ENCODE measurements at regions of chr2 and their contacts with region 1.

Region 1: DNA sequence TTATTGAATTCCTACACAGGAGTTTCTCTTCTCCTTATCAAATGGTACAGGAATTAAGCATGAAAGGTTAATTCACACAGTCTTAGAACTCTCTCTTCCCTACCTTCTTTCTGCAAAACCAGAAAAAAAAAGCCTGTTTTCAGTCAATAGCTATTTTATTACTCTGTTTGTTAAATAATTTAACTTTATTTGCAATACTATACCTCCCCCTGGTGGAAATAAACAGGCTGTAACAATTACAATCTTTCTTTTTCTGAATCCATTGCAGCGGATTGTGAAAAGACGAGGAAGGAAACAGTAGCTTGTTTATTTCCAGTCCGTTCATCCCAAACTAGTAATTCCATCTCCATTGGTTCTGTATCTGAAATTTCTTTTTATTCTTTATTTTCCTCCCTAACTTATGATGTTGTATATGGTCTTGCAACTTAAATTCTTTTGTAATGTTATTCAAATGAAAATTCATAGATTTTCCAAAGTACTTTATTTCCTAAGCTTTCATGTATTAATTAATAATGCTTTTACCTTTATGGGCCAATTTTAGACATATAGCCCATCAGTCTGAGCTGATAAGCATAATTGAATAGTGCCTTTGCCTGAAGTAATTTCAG is 165.2 kb downstream of the SH3BP4 start:
- DNase-seq: no peak
- H3K4me3 ChIP-seq: no peak overlapping the region
- CTCF ChIP-seq: peak; percentile 22

Region 2: GRCh38 chr2:234500394-234501006 is 616.5 kb before region 1 on chr2:
- CTCF ChIA-PET with region 1: interaction called, 25 read pairs
- POLR2A ChIA-PET with region 1: no interaction called
- DNase-seq: no peak
- H3K4me3 ChIP-seq: no peak overlapping the region
- CTCF ChIP-seq: peak; percentile 46

Region 3: DNA sequence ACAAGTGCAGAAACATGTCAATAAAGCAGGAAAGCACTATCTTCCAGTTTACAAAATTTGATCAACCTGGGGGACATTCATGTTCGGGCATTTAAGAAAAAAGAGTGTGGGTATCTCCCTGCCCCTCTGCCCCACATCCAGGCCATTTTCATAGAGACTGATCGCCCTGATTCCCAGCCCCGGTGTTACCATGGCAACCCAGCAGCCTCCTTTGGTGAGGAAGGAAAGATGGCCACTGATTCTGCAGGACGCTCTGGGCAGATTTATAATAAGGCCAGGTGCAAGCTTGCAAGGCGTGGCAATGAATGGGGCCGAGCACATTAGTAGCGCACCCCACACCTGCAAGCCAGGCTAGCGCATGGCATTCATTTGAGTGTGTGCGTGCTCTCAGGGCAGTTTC is 583.4 kb before region 1 on chr2:
- CTCF ChIA-PET with region 1: interaction called, 13 read pairs
- POLR2A ChIA-PET with region 1: no interaction called
- DNase-seq: no peak
- H3K4me3 ChIP-seq: no peak overlapping the region
- CTCF ChIP-seq: no peak

Region 4: GRCh38 chr2:234555720-234556119 is 561.3 kb before region 1 on chr2:
- CTCF ChIA-PET with region 1: interaction called, 54 read pairs
- POLR2A ChIA-PET with region 1: no interaction called
- DNase-seq: no peak
- H3K4me3 ChIP-seq: no peak overlapping the region
- CTCF ChIP-seq: no peak

Region 5: GRCh38 chr2:234577191-234577590 is 539.8 kb before region 1 on chr2:
- CTCF ChIA-PET with region 1: interaction called, 10 read pairs
- POLR2A ChIA-PET with region 1: no interaction called
- DNase-seq: no peak
- H3K4me3 ChIP-seq: no peak overlapping the region
- CTCF ChIP-seq: no peak

Measured in AG04449 (cell line).